ENCODE measurements at regions of chr20 and their contacts with region 1.

Region 1: DNA sequence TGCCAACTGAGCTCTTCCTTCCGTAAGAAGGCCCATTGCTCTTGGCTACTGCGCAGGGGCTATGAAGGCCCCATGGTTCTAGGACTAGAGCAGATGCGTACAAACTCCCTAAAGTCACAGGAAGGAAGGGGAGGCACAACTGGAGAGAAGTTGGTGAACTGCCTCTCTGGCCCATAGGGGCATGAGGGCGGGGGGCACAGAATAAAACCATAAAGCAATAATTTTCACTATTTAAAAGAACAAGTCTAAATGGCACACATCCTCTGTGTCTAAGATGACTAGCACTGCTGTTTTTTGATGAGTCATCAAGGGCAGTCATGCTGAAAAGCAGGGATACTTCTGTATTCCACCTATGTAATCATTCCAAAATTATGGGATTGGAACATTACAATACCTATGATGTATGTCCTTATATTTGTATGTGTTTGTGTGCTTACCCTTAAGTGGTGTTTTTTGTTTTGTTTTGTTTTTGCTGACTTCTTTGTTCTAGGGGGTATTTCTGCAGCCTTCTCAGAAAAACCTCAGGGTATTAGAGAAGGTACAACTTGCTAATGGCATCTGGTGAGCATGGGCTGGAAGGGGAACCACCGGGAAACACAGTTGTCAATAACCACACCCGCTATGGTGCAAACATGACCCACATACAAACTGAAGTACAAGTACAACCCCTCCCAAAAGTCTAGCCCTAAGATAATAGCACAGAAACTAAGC is 36.9 kb downstream of the B4GALT5 start:
- DNase-seq: peak; percentile 53 to 66
- ATAC-seq: peak in 1 of 2 experiments; percentile 12; a peak in 2 of 6 replicates
- H3K4me3 ChIP-seq: peak overlapping the region; percentile 13; the same call in 1 of the 3 replicates
- H3K27ac ChIP-seq: peak overlapping the region; percentile 96 to 97
- H3K4me1 ChIP-seq: peaks cover 97% of the 10 kb centered on the region
- CTCF ChIP-seq: no peak
- EP300 ChIP-seq: no peak
- POLR2A ChIP-seq: no peak
- RAD21 ChIP-seq: no peak

Region 2: GRCh38 chr20:49690899-49691620 is 14.3 kb after region 1 on chr20:
- CTCF ChIA-PET with region 1: interaction called, 16 read pairs
- POLR2A ChIA-PET with region 1: interaction called, 6 read pairs
- DNase-seq: peak in 1 of 2 experiments; percentile 91
- ATAC-seq: peak; percentile 76 to 81
- H3K4me3 ChIP-seq: peak overlapping the region; percentile 12; the same call in 2 of the 3 replicates
- H3K27ac ChIP-seq: peak overlapping the region; percentile 98
- H3K4me1 ChIP-seq: peaks cover 95% of the 10 kb centered on the region
- CTCF ChIP-seq: no peak
- EP300 ChIP-seq: peak; percentile 55 to 70; a peak in 3 of 5 replicates
- POLR2A ChIP-seq: no peak
- RAD21 ChIP-seq: peak in 1 of 2 experiments; percentile 44; a peak in 2 of 5 replicates